Activated CD4-positive, alpha-beta T cell treated with anti-CD3 and anti-CD28 coated beads for 36 hours (primary cell): ENCODE measurements at regions of chr13 and their contacts with region 1.

Region 1: DNA sequence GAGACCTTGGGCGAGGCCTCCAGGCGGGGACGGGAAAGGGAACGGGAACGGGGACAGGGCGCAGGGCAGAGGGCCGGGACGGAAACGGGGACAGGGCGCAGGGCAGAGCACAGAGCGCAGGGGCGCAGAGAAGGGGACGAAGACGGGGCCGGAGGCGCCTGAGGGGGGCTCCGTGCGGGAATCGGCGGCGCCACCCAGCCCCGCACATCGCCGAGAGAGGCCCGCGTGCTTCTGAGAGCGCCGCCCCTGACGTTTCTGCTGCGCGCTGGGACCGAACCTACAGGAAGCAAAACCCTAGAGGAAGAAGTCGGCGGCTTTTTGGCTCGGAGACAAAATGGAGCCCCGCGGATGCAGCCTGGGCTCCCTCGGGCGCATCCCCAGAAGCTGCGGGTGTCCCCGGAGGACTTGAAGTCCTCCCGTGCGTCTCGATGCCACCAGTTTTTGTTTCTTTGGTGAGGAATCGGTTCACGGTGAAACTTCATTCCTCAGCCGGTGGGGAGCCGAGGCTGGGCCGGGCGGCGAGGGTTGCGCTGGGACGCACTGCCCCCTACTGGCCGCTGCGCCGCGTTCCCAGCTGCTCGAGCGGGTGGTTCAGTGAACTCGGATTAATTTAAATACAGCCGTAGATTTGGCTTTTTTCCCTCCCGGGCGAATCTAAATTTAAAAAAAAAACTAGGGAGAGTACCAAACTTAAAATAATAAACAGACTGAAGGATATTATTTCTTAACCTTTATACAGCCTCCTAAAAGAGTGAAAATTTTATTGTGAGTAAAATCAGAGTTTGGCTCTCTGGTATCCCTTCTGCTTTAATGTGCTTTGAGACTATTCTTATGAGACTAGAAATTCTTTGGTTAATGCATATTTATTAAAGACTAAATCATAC is 350.0 kb upstream of the ARGLU1 start:
- DNase-seq: peak; percentile 84
- ATAC-seq: peak; percentile 95
- H3K4me3 Mint-ChIP-seq: peak overlapping the region; percentile 68
- H3K27ac Mint-ChIP-seq: peak overlapping the region; percentile 55
- H3K4me1 Mint-ChIP-seq: peaks cover 5% of the 10 kb centered on the region
- H3K27me3 Mint-ChIP-seq: peaks cover 34% of the 10 kb centered on the region

Region 2: DNA sequence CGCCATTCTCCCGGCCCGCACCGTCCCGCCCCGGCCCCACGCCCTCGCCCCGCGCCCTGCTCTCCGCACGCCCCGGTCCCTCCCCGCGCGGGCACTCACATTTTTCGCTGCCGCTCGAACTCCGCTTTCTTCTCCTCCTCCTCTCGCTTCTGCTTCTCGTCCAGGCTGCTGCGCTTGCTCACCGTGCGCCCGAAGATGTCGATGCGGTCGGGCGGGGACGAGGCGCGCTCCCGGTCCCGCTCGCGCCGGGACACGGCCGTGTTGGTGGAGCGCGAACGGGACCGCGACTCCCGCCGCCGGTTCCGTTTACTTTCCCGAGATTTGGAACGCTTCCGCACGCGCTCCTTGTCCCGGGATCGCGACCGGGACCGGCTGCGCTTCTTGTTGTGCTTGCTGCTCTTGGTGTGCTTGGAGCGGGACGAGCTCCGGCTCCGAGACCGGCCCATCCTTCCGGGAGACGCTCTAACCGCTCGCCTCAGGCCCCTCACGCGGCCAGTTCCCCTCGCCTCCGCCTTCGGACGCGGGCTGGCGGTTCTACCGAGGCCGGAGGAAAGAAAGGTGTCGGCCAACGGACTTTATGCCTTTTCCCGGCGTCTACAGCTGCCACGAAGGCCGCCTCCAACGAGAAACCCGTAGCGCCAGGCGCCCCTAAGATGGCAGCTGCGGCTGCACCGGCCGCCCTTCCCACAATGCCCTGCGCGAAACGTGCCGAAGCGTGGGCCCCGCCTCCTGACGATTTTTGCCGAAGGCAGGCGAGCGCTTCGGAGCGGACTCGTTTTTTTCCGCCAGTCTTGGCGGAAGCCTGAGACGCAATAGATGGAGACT is 350.2 kb before region 1 on chr13 and contains the start of gene ARGLU1:
- CTCF ChIA-PET with region 1: no interaction called
- POLR2A ChIA-PET with region 1: no interaction called
- intact Hi-C with region 1: loop called in 1 of 2 experiments (anchors 1 kb)
- DNase-seq: peak; percentile 97
- ATAC-seq: peak; percentile 88
- H3K4me3 Mint-ChIP-seq: peak within 1 kb of the TSS; percentile 97
- H3K27ac Mint-ChIP-seq: peak within 1 kb of the TSS; percentile 92
- H3K4me1 Mint-ChIP-seq: peaks cover 39% of the 10 kb centered on the region
- H3K27me3 Mint-ChIP-seq: no peaks in the 10 kb centered on the region
- total RNA-seq, gene ARGLU1: 68.8 to 94.2 TPM